Activated CD4-positive, alpha-beta T cell treated with anti-CD3 and anti-CD28 coated beads, Interleukin-2, amount 10 ng/mL, durations not matched to agents 7 days and 5 days (primary cell): ENCODE measurements at regions of chr12 and their contacts with region 1.

Region 1: DNA sequence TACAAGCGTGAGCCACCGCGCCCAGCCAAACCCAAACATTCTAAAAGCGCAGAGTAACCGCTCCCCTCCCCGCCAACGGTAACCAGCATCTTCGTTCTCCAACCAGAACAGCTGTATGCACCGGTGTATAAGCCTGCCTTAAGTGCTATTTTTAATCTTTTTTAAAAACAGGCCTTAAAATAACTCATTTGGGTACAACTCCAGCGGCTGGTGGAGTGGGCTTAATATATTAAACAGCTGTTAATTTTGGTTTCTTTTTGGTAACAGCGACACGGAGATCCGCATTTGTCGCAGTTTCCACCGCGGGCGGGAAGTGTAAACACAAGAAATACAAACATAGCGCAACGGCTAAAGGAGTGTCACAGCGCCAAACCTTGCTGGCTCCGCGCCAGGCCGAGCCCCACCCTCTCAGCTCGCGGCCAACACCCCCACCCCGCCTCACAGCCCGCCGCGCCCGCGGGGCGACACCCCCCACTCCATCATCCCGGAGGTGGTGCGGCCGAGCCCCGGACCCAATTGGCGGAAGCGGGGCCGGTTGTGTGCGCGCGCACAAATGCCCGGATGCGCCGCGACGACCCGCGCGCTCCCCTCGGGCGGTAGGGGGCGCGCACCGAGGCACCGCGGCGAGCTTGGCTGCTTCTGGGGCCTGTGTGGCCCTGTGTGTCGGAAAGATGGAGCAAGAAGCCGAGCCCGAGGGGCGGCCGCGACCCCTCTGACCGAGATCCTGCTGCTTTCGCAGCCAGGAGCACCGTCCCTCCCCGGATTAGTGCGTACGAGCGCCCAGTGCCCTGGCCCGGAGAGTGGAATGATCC is at the start of gene MDM2:
- DNase-seq: peak; percentile 98
- H3K4me3 Mint-ChIP-seq: peak within 1 kb of the TSS; percentile 93
- H3K27ac Mint-ChIP-seq: peak within 1 kb of the TSS; percentile 100
- H3K4me1 Mint-ChIP-seq: peaks cover 53% of the 10 kb centered on the region
- H3K27me3 Mint-ChIP-seq: no peaks in the 10 kb centered on the region
- total RNA-seq, gene MDM2: 207 to 214 TPM

Region 2: GRCh38 chr12:68821357-68822188 is 13.8 kb after region 1 on chr12:
- CTCF ChIA-PET with region 1: interaction called, 25 read pairs
- POLR2A ChIA-PET with region 1: interaction called, 4 read pairs
- DNase-seq: no peak
- H3K4me3 Mint-ChIP-seq: no peak overlapping the region
- H3K27ac Mint-ChIP-seq: peak overlapping the region; percentile 79
- H3K4me1 Mint-ChIP-seq: peaks cover 42% of the 10 kb centered on the region
- H3K27me3 Mint-ChIP-seq: no peaks in the 10 kb centered on the region